ENCODE measurements at regions of chr1 and their contacts with region 1.

Region 1: GRCh38 chr1:165403835-165404482 is 41.0 kb downstream of the RXRG start:
- DNase-seq: peak in 1 of 2 donors; percentile 24
- ATAC-seq: peak; percentile 25 to 68 (median 57)
- H3K4me3 ChIP-seq: no peak overlapping the region
- H3K27ac ChIP-seq: no peak overlapping the region
- H3K4me1 ChIP-seq: peaks cover 0 to 12% (median 0%) of the 10 kb centered on the region in 9 donors
- H3K27me3 ChIP-seq: peaks cover 0 to 52% (median 0%) of the 10 kb centered on the region in 7 donors
- CTCF ChIP-seq: peak; percentile 44 to 75 (median 71)

Region 2: DNA sequence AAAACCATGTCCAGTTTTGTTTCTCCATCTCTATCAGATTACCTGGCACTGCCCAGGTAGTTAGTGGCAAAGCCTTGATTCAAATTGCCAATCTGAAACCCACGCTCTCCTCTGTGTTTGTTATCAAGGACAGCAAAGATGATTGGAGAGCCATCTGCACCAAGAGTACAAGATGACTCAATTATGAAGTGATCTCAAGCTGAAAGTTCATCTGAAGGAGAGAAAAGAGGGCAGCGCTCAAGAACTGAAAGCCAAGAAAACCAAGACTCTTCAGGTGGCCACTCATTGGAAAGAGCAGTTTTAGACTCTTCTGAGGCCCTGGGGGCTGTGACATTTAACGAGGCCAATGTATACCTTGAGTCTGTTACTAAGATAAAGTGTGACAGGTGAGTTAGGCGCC is 27.1 kb after region 1 on chr1:
- intact Hi-C with region 1: no loop called
- DNase-seq: no peak
- ATAC-seq: no peak
- H3K4me3 ChIP-seq: no peak overlapping the region
- H3K27ac ChIP-seq: no peak overlapping the region
- H3K4me1 ChIP-seq: peaks cover 0 to 10% (median 0%) of the 10 kb centered on the region in 9 donors
- H3K27me3 ChIP-seq: no peaks in the 10 kb centered on the region
- CTCF ChIP-seq: no peak

Region 3: GRCh38 chr1:165543532-165544495 is 139.9 kb after region 1 on chr1 and contains the start of gene LRRC52:
- intact Hi-C with region 1: loop called in 3 of 10 experiments (anchors 5 kb)
- DNase-seq: peak; percentile 77 to 86
- ATAC-seq: peak; percentile 76 to 93 (median 90)
- H3K4me3 ChIP-seq: no peak within 1 kb of the TSS
- H3K27ac ChIP-seq: peak within 1 kb of the TSS in 9 of 10 donors; percentile 14 to 78 (median 70)
- H3K4me1 ChIP-seq: peaks cover 6 to 37% (median 13%) of the 10 kb centered on the region in 9 donors
- H3K27me3 ChIP-seq: peaks cover 0 to 27% (median 0%) of the 10 kb centered on the region in 7 donors
- CTCF ChIP-seq: peak in 3 of 9 donors; percentile 49 to 58 (median 49)
- total RNA-seq, gene LRRC52: 0.42 to 1.6 (median 0.57) TPM in 7 of 10 donors, not detected in the others

Measured in heart right ventricle (tissue), 16 donors.